Panc1 (cell line): ENCODE measurements at regions of chr14 and their contacts with region 1.

Region 1: GRCh38 chr14:93683226-93683625 is 105.1 kb downstream of the PRIMA1 start:
- DNase-seq: no peak
- ATAC-seq: no peak
- H3K4me3 ChIP-seq: no peak overlapping the region
- H3K27ac ChIP-seq: no peak overlapping the region
- H3K4me1 ChIP-seq: no peaks in the 10 kb centered on the region
- H3K27me3 ChIP-seq: peaks cover 13% of the 10 kb centered on the region
- CTCF ChIP-seq: no peak

Region 2: GRCh38 chr14:92963301-92964123 is 719.7 kb before region 1 on chr14:
- CTCF ChIA-PET with region 1: no interaction called
- POLR2A ChIA-PET with region 1: no interaction called
- in situ Hi-C with region 1: no loop called
- intact Hi-C with region 1: no loop called
- DNase-seq: no peak
- ATAC-seq: no peak
- H3K4me3 ChIP-seq: no peak overlapping the region
- H3K27ac ChIP-seq: no peak overlapping the region
- H3K4me1 ChIP-seq: no peaks in the 10 kb centered on the region
- H3K27me3 ChIP-seq: no peaks in the 10 kb centered on the region
- CTCF ChIP-seq: no peak

Region 3: DNA sequence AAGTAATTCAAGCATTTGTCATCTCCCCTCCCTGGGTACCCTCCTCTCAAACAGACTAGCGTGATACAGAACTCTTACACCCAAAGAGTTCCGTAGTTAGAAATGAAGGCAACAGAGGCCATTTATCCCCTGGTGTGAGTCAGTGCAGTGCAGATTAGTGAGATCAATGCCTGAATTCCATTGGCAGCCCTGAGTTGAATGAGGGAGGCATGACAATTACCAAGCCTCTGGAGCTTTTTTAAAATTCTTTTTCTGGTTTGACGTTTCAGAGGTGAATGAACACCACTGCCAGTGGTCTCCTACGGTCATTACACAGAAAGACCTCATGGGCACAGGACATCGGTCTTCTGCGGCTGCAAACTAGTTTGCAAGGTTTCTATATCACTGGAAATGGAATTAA is 10.7 kb after region 1 on chr14:
- CTCF ChIA-PET with region 1: no interaction called
- POLR2A ChIA-PET with region 1: interaction called, 17 read pairs
- in situ Hi-C with region 1: no loop called
- intact Hi-C with region 1: no loop called
- DNase-seq: no peak
- ATAC-seq: no peak
- H3K4me3 ChIP-seq: no peak overlapping the region
- H3K27ac ChIP-seq: no peak overlapping the region
- H3K4me1 ChIP-seq: no peaks in the 10 kb centered on the region
- H3K27me3 ChIP-seq: peaks cover 4% of the 10 kb centered on the region
- CTCF ChIP-seq: no peak